ENCODE measurements at regions of chr5 and their contacts with region 1.

Region 1: DNA sequence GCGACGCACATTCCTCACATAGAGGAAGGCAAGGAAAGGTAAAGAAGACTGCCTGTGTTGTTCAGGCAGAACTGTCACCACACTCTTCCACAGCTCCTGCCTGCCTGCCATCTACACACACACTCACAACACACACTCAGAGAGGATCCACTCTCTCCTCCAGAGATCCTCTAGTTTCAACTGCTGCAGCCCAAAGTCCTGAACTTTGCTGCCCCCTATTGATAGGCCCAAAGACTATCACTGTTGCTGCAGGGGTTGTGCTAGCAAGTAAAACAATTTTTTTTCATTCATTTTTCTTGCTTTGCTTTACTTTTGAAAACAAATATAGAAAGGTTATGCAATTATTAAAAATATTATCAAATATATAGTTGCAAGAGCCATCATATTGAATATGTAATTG is 5.9 kb upstream of the CFAP90 start:
- DNase-seq: no peak
- H3K4me3 ChIP-seq: no peak overlapping the region
- H3K27ac ChIP-seq: no peak overlapping the region
- H3K4me1 ChIP-seq: no peaks in the 10 kb centered on the region
- H3K27me3 ChIP-seq: no peaks in the 10 kb centered on the region
- CTCF ChIP-seq: peak in 3 of 4 experiments; percentile 52 to 65 (median 55)
- POLR2A ChIP-seq: no peak

Region 2: DNA sequence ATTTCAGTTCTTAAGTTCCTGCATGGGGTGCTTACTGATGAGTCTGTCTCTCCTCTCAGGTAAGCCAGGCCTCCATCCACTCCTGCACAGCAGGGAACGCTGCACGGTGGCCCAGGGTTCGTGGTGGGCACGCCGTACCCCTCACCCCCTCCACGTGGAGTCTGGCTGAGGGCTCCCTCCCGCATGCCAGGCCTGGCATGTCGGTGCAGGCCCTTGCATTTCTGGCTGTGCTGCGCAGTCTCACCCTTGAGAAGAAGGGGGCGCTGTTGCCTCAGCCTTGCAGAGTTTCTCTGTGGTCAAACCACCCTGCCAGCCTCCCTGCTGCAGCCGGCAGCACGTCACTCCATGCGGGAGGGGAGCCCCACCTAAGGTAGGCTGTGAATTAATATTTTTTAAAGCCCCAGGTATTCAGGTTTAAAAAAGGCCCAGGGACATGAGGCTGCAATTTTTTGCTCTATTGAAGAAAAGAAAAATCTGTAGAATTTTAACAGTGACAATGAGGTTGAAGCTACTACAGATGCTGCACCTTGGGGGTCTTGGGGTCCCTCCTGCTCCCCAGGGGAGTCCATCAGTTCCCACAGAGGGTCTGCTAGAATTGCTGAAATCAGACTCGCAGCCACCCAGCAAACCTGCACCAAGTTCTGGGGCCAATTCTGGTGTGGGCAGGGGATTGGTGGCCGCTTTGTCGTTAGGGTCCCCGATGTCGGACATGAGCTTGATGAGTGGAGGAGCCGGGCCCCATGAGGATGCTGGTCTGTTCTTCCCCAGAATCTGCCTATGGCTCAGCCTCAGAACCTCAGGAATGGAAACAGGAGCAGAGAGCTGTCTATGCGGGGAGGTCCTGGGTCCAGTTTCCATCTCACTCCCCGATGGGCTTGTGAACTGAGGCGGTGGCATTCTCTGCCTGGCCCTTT is 1091.0 kb before region 1 on chr5:
- intact Hi-C with region 1: loop called (anchors 10 kb)
- DNase-seq: peak; percentile 74
- H3K4me3 ChIP-seq: no peak overlapping the region
- H3K27ac ChIP-seq: no peak overlapping the region
- H3K4me1 ChIP-seq: no peaks in the 10 kb centered on the region
- H3K27me3 ChIP-seq: no peaks in the 10 kb centered on the region
- CTCF ChIP-seq: peak; percentile 58 to 90 (median 74)
- POLR2A ChIP-seq: no peak

Measured in prostate gland (tissue), 2 donors.